Heart left ventricle (tissue), 16 donors: ENCODE measurements at regions of chr7 and their contacts with region 1.

Region 1: DNA sequence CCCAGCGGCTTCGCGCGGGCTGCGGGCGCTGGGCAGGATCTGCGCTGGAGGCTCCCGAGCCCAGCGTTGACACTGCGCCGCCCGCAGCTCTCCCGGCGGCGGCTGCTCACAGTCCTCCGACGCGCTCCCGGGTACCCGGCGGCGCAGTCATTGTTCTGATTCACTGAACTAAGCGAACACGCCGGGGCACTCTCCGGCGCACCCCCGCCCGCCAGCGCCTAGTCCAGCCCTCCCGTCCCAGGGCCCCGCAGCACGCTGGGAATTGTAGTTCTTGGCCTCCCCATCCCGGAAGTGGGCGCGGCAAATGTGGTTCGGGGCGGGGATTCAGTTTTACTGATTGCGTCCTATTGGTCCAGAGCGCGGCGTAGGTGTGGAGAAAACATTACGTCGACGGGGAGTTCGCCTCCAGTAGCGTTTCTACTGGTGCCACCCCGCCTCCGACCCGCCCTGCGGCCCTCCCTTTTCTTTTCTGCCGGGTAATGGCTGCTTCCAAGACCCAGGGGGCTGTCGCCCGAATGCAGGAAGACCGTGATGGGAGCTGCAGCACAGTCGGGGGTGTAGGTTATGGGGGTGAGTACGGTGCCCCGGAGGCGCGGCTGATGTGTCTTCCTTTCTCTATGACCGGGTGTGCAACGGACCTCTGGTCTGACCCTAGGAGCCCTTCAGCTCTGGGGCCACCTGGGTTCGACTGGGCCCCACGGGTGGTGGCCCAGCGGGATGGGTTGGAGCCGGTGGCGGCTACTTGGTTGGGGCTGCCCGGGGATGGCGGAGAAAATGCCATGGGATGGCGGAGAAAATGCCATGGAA is at the starts of genes DOCK4 and ZNF277:
- DNase-seq: peak; percentile 99
- ATAC-seq: peak; percentile 96 to 98 (median 96)
- H3K4me3 ChIP-seq: peak within 1 kb of the TSS; percentile 59 to 98 (median 88)
- H3K27ac ChIP-seq: peak within 1 kb of the TSS; percentile 72 to 95 (median 90)
- H3K4me1 ChIP-seq: peaks cover 0 to 43% (median 17%) of the 10 kb centered on the region in 12 donors
- H3K27me3 ChIP-seq: no peaks in the 10 kb centered on the region
- CTCF ChIP-seq: peak in 1 of 12 donors; percentile 16
- POLR2A ChIP-seq: peak; percentile 60 to 98
- total RNA-seq, gene DOCK4: 9.7 to 40.8 (median 17.0) TPM
- total RNA-seq, gene ZNF277: 10.3 to 26.5 (median 16.6) TPM

Region 2: DNA sequence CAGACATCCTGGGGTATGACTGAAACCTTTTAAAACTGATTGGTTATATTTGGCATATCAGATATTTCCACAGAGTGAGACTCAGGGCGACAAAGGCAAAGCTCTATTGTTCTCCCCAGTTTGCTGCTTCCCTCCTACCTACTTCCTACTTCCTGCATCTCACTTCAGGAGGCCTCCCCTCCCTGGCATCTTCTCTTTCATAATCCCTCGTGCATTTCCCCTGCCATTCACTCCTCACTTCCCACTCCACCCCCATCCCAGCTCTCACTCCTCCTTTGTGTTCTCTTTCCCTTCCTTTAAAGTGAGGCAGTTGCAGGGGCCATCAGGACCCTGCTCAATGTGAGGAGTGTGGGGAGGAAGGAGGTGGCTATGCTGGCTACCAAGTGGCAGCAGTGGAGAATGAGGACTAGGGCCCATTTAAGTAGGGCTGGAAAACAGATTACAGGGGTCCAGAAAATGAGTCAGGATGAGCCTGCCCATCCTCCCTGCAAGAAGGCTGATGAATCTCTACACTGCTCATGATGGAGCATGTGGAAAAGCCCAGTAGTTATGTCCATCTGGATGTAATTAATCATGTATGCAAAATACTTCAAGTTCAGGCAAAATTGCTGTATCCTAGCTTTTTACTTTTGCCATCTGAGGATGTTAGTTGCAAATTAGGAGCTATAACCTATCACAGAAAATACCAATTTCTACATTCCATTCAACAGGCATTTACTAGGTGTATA is 332.3 kb before region 1 on chr7:
- intact Hi-C with region 1: loop called in 1 of 10 experiments (anchors 5 kb)
- DNase-seq: no peak
- ATAC-seq: peak in 3 of 4 donors; percentile 43 to 82 (median 55)
- H3K4me3 ChIP-seq: no peak overlapping the region
- H3K27ac ChIP-seq: peak overlapping the region in 9 of 12 donors; percentile 41 to 79 (median 50)
- H3K4me1 ChIP-seq: peaks cover 0 to 23% (median 14%) of the 10 kb centered on the region in 12 donors
- H3K27me3 ChIP-seq: no peaks in the 10 kb centered on the region
- CTCF ChIP-seq: no peak
- POLR2A ChIP-seq: no peak

Region 3: GRCh38 chr7:111982804-111983203 is 223.6 kb before region 1 on chr7:
- intact Hi-C with region 1: loop called in 1 of 10 experiments (anchors 5 kb)
- DNase-seq: no peak
- ATAC-seq: no peak
- H3K4me3 ChIP-seq: no peak overlapping the region
- H3K27ac ChIP-seq: no peak overlapping the region
- H3K4me1 ChIP-seq: peaks cover 0 to 22% (median 10%) of the 10 kb centered on the region in 12 donors
- H3K27me3 ChIP-seq: no peaks in the 10 kb centered on the region
- CTCF ChIP-seq: no peak
- POLR2A ChIP-seq: no peak

Region 4: DNA sequence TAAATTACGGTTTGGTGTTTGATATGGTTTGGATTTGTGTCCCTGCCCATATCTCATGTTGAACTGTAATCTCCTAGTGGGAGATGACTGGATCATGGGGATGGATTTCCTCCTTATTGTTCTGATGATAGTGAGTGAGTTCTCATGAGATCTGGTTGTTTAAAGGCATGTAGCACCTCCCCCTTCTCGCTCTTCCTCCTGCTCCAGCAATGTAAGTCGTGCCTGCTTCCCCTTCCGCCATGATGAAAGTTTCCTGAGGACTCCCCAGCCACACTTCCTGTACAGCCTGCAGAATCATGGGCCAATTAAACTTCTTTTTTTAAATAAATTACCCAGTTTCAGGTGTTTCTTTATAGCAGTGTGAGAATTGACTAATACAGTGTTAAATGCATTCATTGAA is 116.9 kb before region 1 on chr7:
- intact Hi-C with region 1: loop called in 4 of 10 experiments (anchors 5 to 10 kb)
- DNase-seq: peak in 3 of 5 donors; percentile 44 to 53 (median 44)
- ATAC-seq: peak in 3 of 4 donors; percentile 50 to 83 (median 62)
- H3K4me3 ChIP-seq: no peak overlapping the region
- H3K27ac ChIP-seq: peak overlapping the region in 3 of 12 donors; percentile 10 to 44 (median 26)
- H3K4me1 ChIP-seq: peaks cover 0 to 45% (median 11%) of the 10 kb centered on the region in 12 donors
- H3K27me3 ChIP-seq: no peaks in the 10 kb centered on the region
- CTCF ChIP-seq: no peak
- POLR2A ChIP-seq: no peak

Region 5: DNA sequence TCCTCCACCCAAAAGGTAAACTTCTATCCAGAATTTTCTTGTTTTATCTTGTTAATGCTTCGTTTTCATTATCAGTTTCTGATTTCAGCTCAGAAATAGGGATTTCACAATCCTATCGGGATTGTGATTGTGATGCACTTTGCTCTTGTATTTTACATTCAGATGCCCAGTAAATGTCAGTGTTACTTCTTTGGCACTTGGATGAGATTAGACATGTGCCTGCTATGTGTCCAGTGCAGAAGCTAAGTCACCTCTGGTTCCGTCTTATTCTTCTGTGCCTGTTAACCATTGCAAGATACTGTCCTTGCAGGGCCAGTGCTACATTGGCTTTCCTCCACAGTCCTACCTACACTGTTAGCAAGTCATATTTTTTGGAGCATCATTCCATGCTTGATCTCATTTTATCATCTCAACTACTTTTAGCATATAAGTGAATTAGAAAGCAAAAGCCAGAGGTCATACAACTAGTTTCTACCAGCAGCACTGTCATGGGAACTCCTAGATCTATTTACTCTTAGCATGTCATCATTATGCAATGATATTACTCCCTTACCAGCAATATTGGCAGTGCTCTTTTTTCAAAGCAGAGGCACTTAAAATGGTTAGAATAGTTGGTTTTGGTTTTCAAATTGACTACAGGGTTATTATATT is 26.7 kb after region 1 on chr7:
- intact Hi-C with region 1: no loop called
- DNase-seq: no peak
- ATAC-seq: peak in 3 of 4 donors; percentile 77 to 95 (median 87)
- H3K4me3 ChIP-seq: no peak overlapping the region
- H3K27ac ChIP-seq: peak overlapping the region in 1 of 12 donors; percentile 14
- H3K4me1 ChIP-seq: peaks cover 0 to 23% (median 6%) of the 10 kb centered on the region in 12 donors
- H3K27me3 ChIP-seq: no peaks in the 10 kb centered on the region
- CTCF ChIP-seq: no peak
- POLR2A ChIP-seq: no peak

Region 6: GRCh38 chr7:112262855-112263487 is 56.5 kb after region 1 on chr7:
- intact Hi-C with region 1: loop called in 1 of 10 experiments (anchors 5 kb)
- DNase-seq: no peak
- ATAC-seq: no peak
- H3K4me3 ChIP-seq: no peak overlapping the region
- H3K27ac ChIP-seq: no peak overlapping the region
- H3K4me1 ChIP-seq: peaks cover 0 to 33% (median 8%) of the 10 kb centered on the region in 12 donors
- H3K27me3 ChIP-seq: no peaks in the 10 kb centered on the region
- CTCF ChIP-seq: no peak
- POLR2A ChIP-seq: no peak

Region 7: DNA sequence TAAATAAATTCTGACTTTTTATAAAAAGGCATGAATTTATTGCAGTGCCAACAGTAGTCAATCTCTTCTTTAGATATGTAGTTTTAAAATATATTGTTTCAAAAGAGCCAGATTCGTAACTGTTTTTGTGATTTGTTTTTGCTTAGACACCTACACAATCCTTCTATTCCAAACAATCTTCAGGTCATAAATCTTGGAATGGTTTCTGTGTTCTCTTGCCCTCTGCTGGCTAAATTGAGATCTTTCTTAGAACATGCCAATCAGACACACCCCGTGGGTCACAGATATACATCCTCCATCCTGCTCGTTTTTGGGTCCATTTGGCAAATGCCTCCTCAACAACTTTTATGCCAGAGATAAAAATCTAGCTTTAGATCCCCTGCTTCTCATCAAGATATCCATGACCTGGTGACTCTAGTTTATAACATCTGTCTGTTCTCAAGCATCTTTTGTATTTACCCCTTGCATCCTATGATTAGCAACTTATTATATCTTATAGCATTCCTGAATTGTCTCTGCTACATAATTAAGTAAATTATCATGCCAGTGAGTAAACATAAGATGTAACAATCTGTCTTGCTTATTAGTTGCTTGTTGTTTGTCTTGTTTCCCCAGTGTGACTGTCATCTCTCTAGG is 208.5 kb after region 1 on chr7:
- intact Hi-C with region 1: loop called in 1 of 10 experiments (anchors 10 kb)
- DNase-seq: no peak
- ATAC-seq: peak in 3 of 4 donors; percentile 54 to 62 (median 60)
- H3K4me3 ChIP-seq: no peak overlapping the region
- H3K27ac ChIP-seq: no peak overlapping the region
- H3K4me1 ChIP-seq: peaks cover 0 to 8% (median 0%) of the 10 kb centered on the region in 12 donors
- H3K27me3 ChIP-seq: no peaks in the 10 kb centered on the region
- CTCF ChIP-seq: peak; percentile 36 to 66 (median 51)
- POLR2A ChIP-seq: no peak